ENCODE measurements at regions of chr1 and their contacts with region 1.

Region 1: GRCh38 chr1:19926296-19927129 is 3.1 kb upstream of the PLA2G2E start:
- DNase-seq: peak; percentile 96
- ATAC-seq: peak; percentile 78
- H3K4me3 ChIP-seq: peak overlapping the region in 2 of 3 experiments; percentile 17 to 27; a peak in 3 of 6 replicates
- H3K27ac ChIP-seq: peak overlapping the region; percentile 94
- H3K4me1 ChIP-seq: peaks cover 89% of the 10 kb centered on the region
- H3K27me3 ChIP-seq: no peaks in the 10 kb centered on the region
- CTCF ChIP-seq: no peak
- EP300 ChIP-seq: peak; percentile 85 to 88
- POLR2A ChIP-seq: peak in 1 of 2 experiments; percentile 15; a peak in 1 of 4 replicates
- RAD21 ChIP-seq: no peak

Region 2: GRCh38 chr1:19882111-19883071 is 44.1 kb before region 1 on chr1 and contains the start of gene OTUD3:
- CTCF ChIA-PET with region 1: no interaction called
- POLR2A ChIA-PET with region 1: no interaction called
- in situ Hi-C with region 1: no loop called
- intact Hi-C with region 1: loop called (anchors 2 kb)
- DNase-seq: peak; percentile 97
- ATAC-seq: peak; percentile 93
- H3K4me3 ChIP-seq: peak within 1 kb of the TSS; percentile 80 to 82 (median 81)
- H3K27ac ChIP-seq: peak within 1 kb of the TSS; percentile 82
- H3K4me1 ChIP-seq: peaks cover 49% of the 10 kb centered on the region
- H3K27me3 ChIP-seq: no peaks in the 10 kb centered on the region; a peak in 1 of 5 replicates
- CTCF ChIP-seq: peak; percentile 93
- EP300 ChIP-seq: no peak; a peak in 1 of 4 replicates
- POLR2A ChIP-seq: peak; percentile 68 to 87
- RAD21 ChIP-seq: peak; percentile 56; the same call in 1 of the 2 replicates
- total RNA-seq, gene OTUD3: 5.2 and 7.5 TPM in 2 replicates

Region 3: GRCh38 chr1:20472860-20473711 is 546.6 kb after region 1 on chr1:
- CTCF ChIA-PET with region 1: no interaction called
- POLR2A ChIA-PET with region 1: no interaction called
- in situ Hi-C with region 1: loop called (anchors 5 kb)
- intact Hi-C with region 1: no loop called
- DNase-seq: no peak
- ATAC-seq: no peak
- H3K4me3 ChIP-seq: no peak overlapping the region
- H3K27ac ChIP-seq: no peak overlapping the region
- H3K4me1 ChIP-seq: peaks cover 63% of the 10 kb centered on the region
- H3K27me3 ChIP-seq: peaks cover 2 to 4% of the 10 kb centered on the region in 2 experiments; a peak in 2 of 5 replicates
- CTCF ChIP-seq: no peak
- EP300 ChIP-seq: no peak
- POLR2A ChIP-seq: no peak
- RAD21 ChIP-seq: no peak